Activated naive CD4-positive, alpha-beta T cell treated with anti-CD3 and anti-CD28 coated beads for 36 hours (primary cell): ENCODE measurements at regions of chr21 and their contacts with region 1.

Region 1: GRCh38 chr21:29436143-29436542 is 137.4 kb downstream of the BACH1 start:
- DNase-seq: peak; percentile 78
- H3K4me3 Mint-ChIP-seq: peak overlapping the region; percentile 76
- H3K27ac Mint-ChIP-seq: peak overlapping the region; percentile 83
- H3K4me1 Mint-ChIP-seq: peaks cover 50% of the 10 kb centered on the region
- H3K27me3 Mint-ChIP-seq: no peaks in the 10 kb centered on the region

Region 2: GRCh38 chr21:28832013-28832714 is 604.0 kb before region 1 on chr21:
- CTCF ChIA-PET with region 1: no interaction called
- intact Hi-C with region 1: loop called (anchors 10 kb)
- DNase-seq: peak; percentile 36
- H3K4me3 Mint-ChIP-seq: no peak overlapping the region
- H3K27ac Mint-ChIP-seq: no peak overlapping the region
- H3K4me1 Mint-ChIP-seq: peaks cover 57% of the 10 kb centered on the region
- H3K27me3 Mint-ChIP-seq: no peaks in the 10 kb centered on the region

Region 3: GRCh38 chr21:29024474-29025327 is 411.4 kb before region 1 on chr21 and contains the start of gene USP16:
- CTCF ChIA-PET with region 1: no interaction called
- intact Hi-C with region 1: loop called (anchors 5 kb)
- DNase-seq: peak; percentile 95
- H3K4me3 Mint-ChIP-seq: peak within 1 kb of the TSS; percentile 88
- H3K27ac Mint-ChIP-seq: peak within 1 kb of the TSS; percentile 98
- H3K4me1 Mint-ChIP-seq: peaks cover 42% of the 10 kb centered on the region
- H3K27me3 Mint-ChIP-seq: no peaks in the 10 kb centered on the region
- total RNA-seq, gene USP16: 36.1 to 36.7 TPM

Region 4: GRCh38 chr21:29073222-29074006 is 362.7 kb before region 1 on chr21 and contains the start of gene CCT8:
- CTCF ChIA-PET with region 1: no interaction called
- intact Hi-C with region 1: loop called (anchors 1 kb)
- DNase-seq: peak; percentile 99
- H3K4me3 Mint-ChIP-seq: peak within 1 kb of the TSS; percentile 94
- H3K27ac Mint-ChIP-seq: peak within 1 kb of the TSS; percentile 95
- H3K4me1 Mint-ChIP-seq: peaks cover 46% of the 10 kb centered on the region
- H3K27me3 Mint-ChIP-seq: no peaks in the 10 kb centered on the region
- total RNA-seq, gene CCT8: 482 to 515 TPM

Region 5: DNA sequence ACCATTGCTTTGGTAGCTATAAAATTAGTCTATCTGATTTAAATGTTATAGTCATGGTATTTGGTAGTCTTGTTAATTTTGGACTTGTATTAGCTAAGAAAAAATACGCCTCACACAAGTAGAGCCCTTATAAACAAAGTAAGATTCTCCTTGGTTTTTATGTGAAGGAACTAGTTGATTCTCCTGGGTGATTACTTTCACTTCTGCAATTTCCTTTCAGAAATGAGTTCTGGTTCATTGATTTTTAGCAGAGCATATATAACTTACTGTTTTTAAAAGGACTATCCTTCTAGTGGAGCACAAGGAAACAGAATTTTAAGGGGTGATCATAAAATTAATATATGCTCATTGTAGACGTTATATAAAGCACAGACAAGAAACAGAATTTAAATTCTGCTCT is 17.3 kb before region 1 on chr21:
- CTCF ChIA-PET with region 1: no interaction called
- intact Hi-C with region 1: no loop called
- DNase-seq: no peak
- H3K4me3 Mint-ChIP-seq: no peak overlapping the region
- H3K27ac Mint-ChIP-seq: no peak overlapping the region
- H3K4me1 Mint-ChIP-seq: peaks cover 4% of the 10 kb centered on the region
- H3K27me3 Mint-ChIP-seq: no peaks in the 10 kb centered on the region

Region 6: GRCh38 chr21:29449306-29449950 is 13.3 kb after region 1 on chr21:
- CTCF ChIA-PET with region 1: interaction called, 10 read pairs
- intact Hi-C with region 1: loop called (anchors 1 kb)
- DNase-seq: peak; percentile 16
- H3K4me3 Mint-ChIP-seq: peak overlapping the region; percentile 46
- H3K27ac Mint-ChIP-seq: peak overlapping the region; percentile 92
- H3K4me1 Mint-ChIP-seq: peaks cover 17% of the 10 kb centered on the region
- H3K27me3 Mint-ChIP-seq: no peaks in the 10 kb centered on the region

Region 7: DNA sequence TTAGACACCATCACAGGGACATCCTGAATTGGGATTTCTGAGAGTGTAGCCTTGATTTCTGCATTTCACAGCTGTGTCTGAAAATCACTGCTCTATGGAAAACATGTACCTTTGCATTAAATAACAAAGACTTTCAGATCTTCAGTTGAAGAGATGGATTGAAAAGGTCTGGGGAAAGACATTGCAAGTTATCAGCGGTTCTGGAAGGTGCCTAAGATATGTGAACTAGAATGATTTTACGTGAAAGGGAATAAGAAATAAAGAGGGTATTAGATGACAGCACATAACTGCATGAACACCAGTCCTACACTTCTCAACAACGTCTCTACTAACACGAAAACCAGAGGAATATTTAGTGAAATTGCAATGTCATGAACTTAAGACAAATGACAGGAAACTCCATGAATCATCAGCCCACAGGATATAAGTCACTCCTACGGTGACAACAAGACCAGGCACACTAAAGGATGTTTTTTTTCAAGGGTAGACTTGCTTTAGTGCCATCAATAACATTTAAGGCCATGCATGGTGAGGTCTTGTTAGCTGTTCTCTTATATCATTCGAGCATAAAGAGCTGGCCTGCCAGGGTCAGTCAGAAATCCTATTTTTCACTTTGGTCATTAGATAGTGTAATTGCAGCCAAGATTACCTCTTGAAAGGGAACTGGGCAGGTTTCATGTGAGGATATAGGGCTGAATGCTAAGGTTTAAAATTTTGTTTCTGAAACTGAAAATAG is 220.5 kb after region 1 on chr21:
- CTCF ChIA-PET with region 1: no interaction called
- intact Hi-C with region 1: loop called (anchors 1 kb)
- DNase-seq: peak; percentile 21
- H3K4me3 Mint-ChIP-seq: peak overlapping the region; percentile 33
- H3K27ac Mint-ChIP-seq: peak overlapping the region; percentile 83
- H3K4me1 Mint-ChIP-seq: peaks cover 29% of the 10 kb centered on the region
- H3K27me3 Mint-ChIP-seq: peaks cover 9% of the 10 kb centered on the region

Region 8: DNA sequence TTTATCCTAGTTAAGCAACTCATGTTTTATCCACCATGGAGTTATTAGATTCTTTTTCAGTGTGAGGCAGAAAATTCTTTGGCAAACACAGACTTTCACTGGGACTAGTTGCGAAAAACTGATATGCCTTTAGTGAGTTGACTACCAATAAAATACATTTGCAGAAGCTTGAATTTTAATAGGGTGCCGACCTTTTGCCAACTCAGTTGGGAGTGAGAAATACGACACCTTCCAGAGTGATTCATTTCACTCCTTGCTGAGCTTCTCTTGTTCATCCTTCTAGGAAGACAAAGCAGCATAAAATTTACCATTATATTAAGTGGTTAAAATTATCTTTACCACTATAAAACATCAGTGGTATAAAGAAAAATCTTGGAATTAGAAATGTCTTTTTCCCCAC is 913.4 kb after region 1 on chr21:
- CTCF ChIA-PET with region 1: no interaction called
- intact Hi-C with region 1: no loop called
- DNase-seq: no peak
- H3K4me3 Mint-ChIP-seq: no peak overlapping the region
- H3K27ac Mint-ChIP-seq: no peak overlapping the region
- H3K4me1 Mint-ChIP-seq: no peaks in the 10 kb centered on the region
- H3K27me3 Mint-ChIP-seq: peaks cover 3% of the 10 kb centered on the region

Region 9: GRCh38 chr21:30718239-30718909 is 1282.2 kb after region 1 on chr21 and contains the start of gene KRTAP21-3:
- CTCF ChIA-PET with region 1: no interaction called
- intact Hi-C with region 1: loop called (anchors 10 kb)
- DNase-seq: peak; percentile 33
- H3K4me3 Mint-ChIP-seq: no peak within 1 kb of the TSS
- H3K27ac Mint-ChIP-seq: peak within 1 kb of the TSS; percentile 46
- H3K4me1 Mint-ChIP-seq: peaks cover 21% of the 10 kb centered on the region
- H3K27me3 Mint-ChIP-seq: peaks cover 2% of the 10 kb centered on the region
- total RNA-seq, gene KRTAP21-3: not detected